ENCODE measurements at regions of chr4 and their contacts with region 1.

Region 1: GRCh38 chr4:173752610-173753230 is 222.7 kb upstream of the HAND2 start:
- DNase-seq: peak; percentile 88
- ATAC-seq: peak; percentile 96
- H3K4me3 Mint-ChIP-seq: no peak overlapping the region
- H3K27ac Mint-ChIP-seq: no peak overlapping the region
- H3K4me1 Mint-ChIP-seq: 0 out of 2 replicates have a peak, but pooled peaks cover 4% of the 10 kb centered on the region
- H3K27me3 Mint-ChIP-seq: peaks cover 5% of the 10 kb centered on the region; the same call in 1 of the 2 replicates
- CTCF ChIP-seq: peak; percentile 86

Region 2: DNA sequence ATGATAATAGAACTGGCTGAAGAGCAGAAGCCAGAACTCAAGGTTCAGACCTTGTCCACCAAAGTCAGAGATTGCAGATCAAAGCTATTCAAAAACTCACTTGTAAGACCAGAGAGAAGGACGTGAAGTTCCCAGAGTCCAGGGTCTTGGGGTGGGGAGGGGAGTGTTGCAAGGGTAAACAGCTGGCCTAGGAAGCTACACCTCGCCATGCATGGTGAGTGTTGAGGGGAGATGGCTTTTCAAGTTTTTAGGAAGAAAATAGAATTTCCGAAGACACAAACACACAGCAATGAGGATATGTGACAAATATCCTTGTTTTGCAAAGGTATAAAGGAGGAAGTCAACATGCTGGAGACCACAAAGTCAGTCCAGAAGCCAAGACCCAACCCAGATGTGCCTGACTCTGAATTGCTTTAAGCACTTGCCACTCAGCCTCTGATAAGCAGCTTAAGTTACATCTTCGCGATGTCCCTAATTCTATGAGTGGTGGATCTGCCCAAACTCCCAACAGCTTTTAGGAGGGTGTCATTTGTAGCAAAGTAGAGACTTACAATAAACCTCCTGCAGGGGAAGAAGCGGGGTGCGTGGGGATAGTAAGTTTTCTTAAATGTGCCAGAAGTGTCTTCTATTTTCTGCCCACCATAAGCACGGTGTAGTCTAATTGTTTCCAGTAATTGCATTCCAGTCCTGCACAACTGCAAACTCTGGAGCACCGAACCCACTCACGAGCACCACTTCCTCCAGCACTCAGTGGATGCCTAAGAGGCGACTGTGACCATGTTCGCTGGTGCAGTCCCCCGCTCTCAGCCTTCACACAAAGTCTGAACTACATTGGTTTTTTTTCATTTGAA is 249.2 kb before region 1 on chr4:
- CTCF ChIA-PET with region 1: interaction called, 11 read pairs
- POLR2A ChIA-PET with region 1: no interaction called
- DNase-seq: no peak
- ATAC-seq: no peak
- H3K4me3 Mint-ChIP-seq: no peak overlapping the region
- H3K27ac Mint-ChIP-seq: no peak overlapping the region
- H3K4me1 Mint-ChIP-seq: peaks cover 58% of the 10 kb centered on the region
- H3K27me3 Mint-ChIP-seq: peaks cover 100% of the 10 kb centered on the region
- CTCF ChIP-seq: no peak

Region 3: DNA sequence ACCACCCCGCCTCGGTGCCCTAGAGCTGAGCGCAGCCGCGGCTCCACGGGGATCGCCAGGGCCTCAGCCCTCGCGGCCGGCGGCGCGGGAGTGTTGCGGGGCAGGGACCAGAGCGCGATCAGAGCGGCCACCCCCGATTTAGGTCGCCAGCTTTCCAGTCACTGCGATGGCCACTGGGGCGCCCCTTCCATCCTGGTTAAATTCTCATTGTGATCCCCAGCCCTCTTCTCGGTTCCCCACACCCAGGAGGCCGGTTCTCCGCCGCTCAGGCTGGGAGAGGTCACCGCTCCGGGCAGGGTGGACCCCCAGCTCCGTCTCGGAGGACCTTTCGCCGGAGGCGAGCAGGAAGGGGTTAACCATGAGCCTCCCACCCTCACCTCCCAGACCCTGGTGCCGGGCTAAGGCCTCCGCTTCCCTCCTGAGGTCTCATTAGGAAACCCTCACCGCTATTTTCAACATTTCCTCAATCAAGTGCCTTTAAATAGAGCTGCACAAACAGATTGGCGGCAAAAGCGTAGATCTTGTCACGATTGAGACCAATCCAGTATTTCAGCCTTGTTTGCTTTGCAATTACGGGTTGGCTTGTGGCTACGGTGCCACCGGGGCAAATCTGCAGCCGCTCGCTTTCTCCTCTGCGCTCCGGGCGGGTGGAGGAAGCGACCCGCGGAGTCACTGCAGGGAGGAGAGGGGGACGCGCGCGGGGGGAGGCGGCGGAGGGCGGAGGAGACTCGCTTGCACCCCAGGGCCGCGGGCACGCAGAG is 214.4 kb before region 1 on chr4:
- CTCF ChIA-PET with region 1: interaction called, 14 read pairs
- POLR2A ChIA-PET with region 1: no interaction called
- DNase-seq: peak; percentile 49
- ATAC-seq: peak; percentile 49
- H3K4me3 Mint-ChIP-seq: peak overlapping the region; percentile 71
- H3K27ac Mint-ChIP-seq: no peak overlapping the region
- H3K4me1 Mint-ChIP-seq: peaks cover 18% of the 10 kb centered on the region
- H3K27me3 Mint-ChIP-seq: peaks cover 99% of the 10 kb centered on the region
- CTCF ChIP-seq: no peak

Region 4: DNA sequence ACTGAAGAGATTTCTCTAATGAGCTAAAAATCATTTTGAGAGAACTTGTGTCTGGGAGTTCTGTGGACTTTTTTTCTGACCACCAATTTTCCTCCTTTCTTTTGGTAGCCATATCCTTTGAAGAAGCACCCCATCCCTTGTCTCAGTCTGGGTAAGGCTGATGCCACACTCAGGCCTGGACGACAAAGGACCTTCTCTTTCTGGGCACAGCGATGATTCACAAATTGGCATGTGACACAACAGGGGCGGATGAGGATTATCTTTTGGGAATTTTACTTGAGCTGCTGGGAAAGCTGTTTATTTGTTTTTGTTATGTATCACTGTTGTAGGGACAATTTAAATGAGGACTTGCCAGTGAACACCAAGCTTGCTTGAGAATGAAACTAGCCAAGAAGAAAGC is 10.7 kb after region 1 on chr4:
- CTCF ChIA-PET with region 1: interaction called, 22 read pairs
- POLR2A ChIA-PET with region 1: interaction called, 3 read pairs
- DNase-seq: no peak
- ATAC-seq: no peak
- H3K4me3 Mint-ChIP-seq: no peak overlapping the region
- H3K27ac Mint-ChIP-seq: no peak overlapping the region
- H3K4me1 Mint-ChIP-seq: no peaks in the 10 kb centered on the region
- H3K27me3 Mint-ChIP-seq: no peaks in the 10 kb centered on the region
- CTCF ChIP-seq: no peak